HEK293 (cell line): ENCODE measurements at regions of chrX and their contacts with region 1.

Region 1: DNA sequence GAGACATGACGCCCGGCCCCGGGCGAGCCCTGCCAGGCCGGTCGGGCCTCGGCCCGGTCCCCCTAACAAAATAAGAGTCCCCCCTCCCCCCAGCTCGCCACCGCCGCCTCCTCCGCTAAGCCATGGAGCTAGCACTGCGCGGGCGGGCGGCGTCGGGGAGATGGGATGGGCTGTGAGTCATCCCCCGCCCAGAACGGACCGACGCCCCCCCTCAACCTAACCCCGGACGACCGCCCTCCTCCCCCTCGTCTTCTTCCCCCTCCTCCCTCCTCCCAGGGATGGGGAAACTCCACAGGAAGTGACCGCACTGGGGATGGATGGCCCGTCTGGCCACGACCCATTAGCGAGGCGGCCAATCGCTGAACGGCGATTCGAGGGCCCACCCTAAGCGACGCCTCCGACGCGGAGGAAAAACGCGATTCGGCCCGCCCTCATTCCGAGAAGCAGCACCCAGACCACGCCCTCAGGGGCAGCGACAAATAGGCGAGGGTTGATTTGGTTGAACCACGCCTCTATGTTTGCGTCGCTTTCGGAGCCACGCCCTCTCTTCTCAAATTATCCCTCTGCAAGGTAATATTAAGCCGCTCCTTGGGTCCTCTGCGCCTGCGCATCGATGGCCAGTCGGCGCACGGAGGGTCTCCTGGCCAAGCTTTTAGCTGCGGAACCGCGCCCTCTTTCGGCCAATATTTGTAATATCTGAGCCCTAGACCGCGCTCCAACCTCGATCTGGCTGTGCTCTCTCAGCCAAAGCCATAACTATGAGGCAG is at the start of gene TFE3:
- H3K4me3 ChIP-seq: peak within 1 kb of the TSS; percentile 77
- H3K27ac ChIP-seq: peak within 1 kb of the TSS; percentile 86
- H3K4me1 ChIP-seq: peaks cover 7% of the 10 kb centered on the region
- CTCF ChIP-seq: peak; percentile 64

Region 2: GRCh38 chrX:48957827-48958634 is 85.4 kb before region 1 on chrX:
- CTCF ChIA-PET with region 1: interaction called, 3 read pairs
- POLR2A ChIA-PET with region 1: interaction called, 24 read pairs
- H3K4me3 ChIP-seq: peak overlapping the region; percentile 67
- H3K27ac ChIP-seq: peak overlapping the region; percentile 74
- H3K4me1 ChIP-seq: peaks cover 3% of the 10 kb centered on the region; the same call in 1 of the 2 replicates
- CTCF ChIP-seq: no peak

Region 3: DNA sequence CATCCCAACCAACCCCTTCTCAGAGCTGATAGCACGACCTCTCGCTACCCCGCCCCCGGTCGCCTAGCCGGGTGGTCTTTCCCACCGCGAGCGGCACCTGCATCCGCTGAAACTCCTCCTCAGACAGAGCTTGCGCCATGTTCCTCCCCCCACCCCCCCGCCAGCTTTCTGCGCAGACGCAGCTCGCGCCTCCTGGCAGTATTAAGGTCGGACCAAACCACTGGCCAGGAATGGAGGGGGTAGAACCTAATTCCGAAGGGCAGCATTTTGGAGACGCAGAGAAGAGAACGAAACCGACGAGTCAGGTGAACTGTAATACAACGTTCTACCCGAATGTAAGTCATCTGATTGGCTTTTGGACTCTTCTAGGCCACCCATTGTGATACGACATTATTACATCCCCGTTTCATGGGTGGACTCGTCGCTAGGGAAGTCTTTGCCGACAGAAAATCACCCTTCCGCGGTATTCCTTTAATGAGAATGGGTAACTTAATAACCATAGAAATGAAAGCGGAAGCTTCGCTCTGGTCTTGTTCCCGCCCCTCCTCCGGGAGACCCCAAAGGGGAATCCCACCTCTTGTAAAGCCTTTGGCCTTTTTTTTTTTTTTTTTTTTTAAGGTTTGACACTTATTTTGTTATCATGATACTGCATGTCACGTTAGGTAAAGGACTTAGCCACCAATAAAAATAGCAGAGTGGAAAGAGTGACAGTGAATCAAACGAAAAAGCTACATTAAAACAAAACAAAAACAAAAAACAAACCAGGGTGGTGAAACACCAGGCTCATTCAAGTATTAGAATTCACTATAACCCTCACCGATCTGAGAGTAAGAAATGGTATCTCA is 41.1 kb before region 1 on chrX and contains the start of gene GRIPAP1:
- CTCF ChIA-PET with region 1: interaction called, 9 read pairs
- POLR2A ChIA-PET with region 1: interaction called, 14 read pairs
- H3K4me3 ChIP-seq: peak within 1 kb of the TSS; percentile 77
- H3K27ac ChIP-seq: peak within 1 kb of the TSS; percentile 91
- H3K4me1 ChIP-seq: no peaks in the 10 kb centered on the region
- CTCF ChIP-seq: no peak

Region 4: GRCh38 chrX:49053223-49054072 is 10.0 kb after region 1 on chrX:
- CTCF ChIA-PET with region 1: interaction called, 4 read pairs
- POLR2A ChIA-PET with region 1: interaction called, 11 read pairs
- H3K4me3 ChIP-seq: peak overlapping the region; percentile 59
- H3K27ac ChIP-seq: no peak overlapping the region
- H3K4me1 ChIP-seq: no peaks in the 10 kb centered on the region
- CTCF ChIP-seq: no peak